PC-9 (cell line): ENCODE measurements at regions of chr11 and their contacts with region 1.

Region 1: DNA sequence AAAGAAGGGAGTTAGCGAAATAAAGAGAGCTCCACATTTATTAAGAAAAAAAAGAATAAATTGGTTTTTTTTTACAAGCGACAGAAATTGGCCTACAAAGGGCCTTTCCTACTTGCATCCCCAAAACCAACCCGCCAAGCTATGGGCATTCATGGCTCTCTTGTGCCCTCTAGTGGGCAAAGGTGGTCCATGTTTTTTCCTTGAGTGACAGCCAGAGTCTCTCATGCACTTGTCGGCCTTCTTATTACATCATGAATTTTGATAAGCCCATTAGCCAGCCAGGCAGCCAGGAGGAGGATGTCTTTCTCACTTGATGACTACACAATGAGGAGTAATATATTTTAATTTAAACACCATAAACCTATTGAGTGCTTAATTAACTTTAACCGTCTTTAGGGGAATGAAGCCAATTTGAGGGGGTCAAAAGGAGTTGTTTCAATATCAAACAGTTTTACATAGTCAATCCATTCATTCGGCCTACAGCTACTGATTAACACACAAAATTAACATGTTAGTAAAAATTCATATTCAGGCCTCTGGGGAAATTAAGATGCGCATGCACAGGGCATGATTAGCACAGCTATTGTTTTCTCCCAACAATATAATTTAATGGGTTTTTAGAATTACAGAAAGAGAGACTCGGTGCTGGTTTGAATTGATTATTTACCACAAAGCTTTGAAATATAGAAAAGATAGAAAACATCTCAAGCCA is 85.5 kb downstream of the RCN1 start:
- DNase-seq: peak; percentile 79 to 81
- H3K4me3 ChIP-seq: no peak overlapping the region
- H3K27ac ChIP-seq: no peak overlapping the region
- H3K4me1 ChIP-seq: no peaks in the 10 kb centered on the region
- H3K27me3 ChIP-seq: peaks cover under 1% of the 10 kb centered on the region; the same call in 1 of the 2 replicates
- CTCF ChIP-seq: peak; percentile 97

Region 2: DNA sequence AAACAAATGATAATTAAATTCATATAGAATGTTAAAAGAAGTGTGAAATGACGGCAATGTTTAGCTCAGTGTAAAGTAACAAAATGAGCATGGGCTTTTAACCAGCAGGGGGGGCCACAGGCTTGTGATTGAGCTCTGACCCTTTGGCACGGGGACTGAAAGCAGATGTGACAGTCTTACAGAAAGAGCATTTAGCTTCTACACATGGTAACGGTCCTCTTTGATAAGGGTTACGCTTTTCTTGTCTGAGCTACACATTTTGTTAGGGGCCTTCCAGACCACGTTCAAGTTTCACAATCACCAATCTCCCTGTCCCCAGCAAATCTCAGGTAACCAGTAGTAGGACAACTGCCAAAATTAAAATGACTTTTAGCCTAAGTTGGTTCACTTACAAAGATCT is 1069.3 kb before region 1 on chr11:
- CTCF ChIA-PET with region 1: interaction called, 3 read pairs
- POLR2A ChIA-PET with region 1: no interaction called
- intact Hi-C with region 1: loop called (anchors 1 kb)
- DNase-seq: peak; percentile 42 to 60
- H3K4me3 ChIP-seq: no peak overlapping the region
- H3K27ac ChIP-seq: no peak overlapping the region
- H3K4me1 ChIP-seq: no peaks in the 10 kb centered on the region
- H3K27me3 ChIP-seq: no peaks in the 10 kb centered on the region
- CTCF ChIP-seq: peak; percentile 87

Region 3: DNA sequence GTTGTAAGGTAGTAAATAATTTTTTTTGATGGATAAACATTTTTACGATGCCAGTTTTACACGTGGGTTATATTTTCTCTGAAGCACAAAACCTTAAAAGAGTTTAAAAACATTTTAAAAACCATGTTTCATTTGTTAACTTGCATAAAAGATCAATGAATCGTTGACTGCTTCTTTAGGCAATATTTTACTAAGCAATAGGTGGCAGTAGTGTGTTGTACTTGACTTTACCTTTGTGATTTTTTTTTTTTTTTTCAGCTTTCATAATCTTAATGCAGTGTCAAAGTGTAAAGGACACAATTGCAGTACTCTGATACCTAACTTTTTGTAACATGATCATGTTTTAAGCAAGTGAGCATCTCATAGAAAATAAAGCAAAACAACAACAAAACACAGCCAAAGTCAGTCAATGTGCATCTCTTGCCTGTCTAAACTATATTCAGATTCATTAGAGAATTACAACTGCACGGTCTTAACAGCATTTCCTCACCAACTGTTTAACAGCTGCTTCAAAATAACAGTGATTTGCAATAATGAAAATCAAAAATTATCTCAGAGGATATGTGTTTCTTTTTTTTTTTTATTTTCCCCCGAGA is 779.0 kb before region 1 on chr11:
- CTCF ChIA-PET with region 1: interaction called, 9 read pairs
- POLR2A ChIA-PET with region 1: no interaction called
- intact Hi-C with region 1: loop called (anchors 1 kb)
- DNase-seq: peak in 1 of 2 experiments; percentile 42
- H3K4me3 ChIP-seq: no peak overlapping the region
- H3K27ac ChIP-seq: no peak overlapping the region
- H3K4me1 ChIP-seq: no peaks in the 10 kb centered on the region
- H3K27me3 ChIP-seq: no peaks in the 10 kb centered on the region
- CTCF ChIP-seq: peak; percentile 80

Region 4: DNA sequence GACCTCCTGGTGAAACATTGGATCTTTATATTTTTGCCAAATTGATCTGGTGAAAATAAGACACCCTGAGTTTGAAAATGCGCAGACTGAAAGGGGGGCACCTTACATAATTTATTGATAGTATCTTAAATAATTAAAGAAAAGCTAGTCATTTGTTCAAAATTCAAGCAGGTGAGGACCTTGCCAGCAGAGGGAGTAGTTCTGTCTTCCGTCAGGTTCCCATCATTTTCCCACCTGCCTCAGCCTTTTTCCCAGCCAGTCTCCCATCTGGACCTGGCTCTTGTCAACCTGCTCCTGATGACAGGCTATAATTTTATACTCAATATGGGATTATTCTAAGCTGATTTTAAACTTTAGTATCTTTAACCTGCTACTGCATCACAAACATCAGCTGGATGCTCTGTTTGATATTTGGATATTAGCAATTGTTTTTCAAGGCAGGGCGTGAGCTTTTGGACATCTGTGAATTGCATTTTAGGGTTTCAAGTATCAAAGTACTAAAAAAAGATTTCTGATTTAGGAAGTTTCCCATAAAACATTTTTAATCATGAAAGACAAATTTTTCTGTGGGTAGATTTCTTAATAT is 534.8 kb before region 1 on chr11:
- CTCF ChIA-PET with region 1: interaction called, 3 read pairs
- POLR2A ChIA-PET with region 1: no interaction called
- intact Hi-C with region 1: loop called (anchors 5 kb)
- DNase-seq: peak; percentile 22 to 37
- H3K4me3 ChIP-seq: no peak overlapping the region
- H3K27ac ChIP-seq: no peak overlapping the region
- H3K4me1 ChIP-seq: peaks cover 8% of the 10 kb centered on the region; the same call in 1 of the 2 replicates
- H3K27me3 ChIP-seq: no peaks in the 10 kb centered on the region
- CTCF ChIP-seq: peak; percentile 87

Region 5: DNA sequence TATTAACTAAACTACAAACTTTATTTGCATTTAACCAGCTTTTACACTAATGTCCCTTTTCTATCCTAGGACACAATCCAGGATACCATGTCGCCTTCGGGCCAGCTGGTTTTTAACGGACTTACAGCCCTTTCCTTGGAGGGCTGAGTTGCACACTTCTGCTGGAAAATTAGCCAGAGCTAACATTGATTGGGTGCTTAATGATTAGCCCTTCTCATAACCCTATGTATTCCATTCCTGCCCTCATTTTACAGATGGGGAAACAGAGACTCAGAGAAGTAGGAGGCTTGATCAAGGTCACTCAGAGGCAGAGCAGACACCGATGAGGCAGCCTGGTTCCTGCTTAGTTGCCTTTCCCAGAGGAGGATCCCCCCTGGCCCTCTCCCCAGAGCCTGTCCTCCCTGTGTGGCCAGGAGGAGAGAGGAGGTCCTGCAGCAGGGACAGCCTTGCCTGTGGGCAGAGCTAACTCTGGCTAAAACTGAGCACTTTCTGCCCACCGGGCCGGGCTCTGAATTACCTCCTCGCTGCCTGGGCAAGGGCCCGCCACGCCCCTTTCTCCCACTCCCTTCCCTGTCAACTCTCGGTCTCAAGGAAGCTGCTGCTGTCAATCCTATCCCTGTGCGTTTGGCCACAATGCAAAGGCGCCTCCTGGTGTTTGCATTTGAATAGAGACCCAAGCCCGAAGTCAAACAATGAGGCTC is 305.6 kb before region 1 on chr11:
- CTCF ChIA-PET with region 1: no interaction called
- POLR2A ChIA-PET with region 1: no interaction called
- intact Hi-C with region 1: loop called (anchors 10 kb)
- DNase-seq: peak; percentile 48 to 50
- H3K4me3 ChIP-seq: no peak overlapping the region
- H3K27ac ChIP-seq: peak overlapping the region; percentile 93
- H3K4me1 ChIP-seq: peaks cover 84% of the 10 kb centered on the region
- H3K27me3 ChIP-seq: no peaks in the 10 kb centered on the region
- CTCF ChIP-seq: peak; percentile 71

Region 6: GRCh38 chr11:32153747-32154146 is 22.6 kb before region 1 on chr11:
- CTCF ChIA-PET with region 1: no interaction called
- POLR2A ChIA-PET with region 1: no interaction called
- intact Hi-C with region 1: no loop called
- DNase-seq: peak in 1 of 2 experiments; percentile 21
- H3K4me3 ChIP-seq: no peak overlapping the region
- H3K27ac ChIP-seq: no peak overlapping the region
- H3K4me1 ChIP-seq: no peaks in the 10 kb centered on the region
- H3K27me3 ChIP-seq: no peaks in the 10 kb centered on the region
- CTCF ChIP-seq: no peak